ENCODE measurements at regions of chr16 and their contacts with region 1.

Region 1: DNA sequence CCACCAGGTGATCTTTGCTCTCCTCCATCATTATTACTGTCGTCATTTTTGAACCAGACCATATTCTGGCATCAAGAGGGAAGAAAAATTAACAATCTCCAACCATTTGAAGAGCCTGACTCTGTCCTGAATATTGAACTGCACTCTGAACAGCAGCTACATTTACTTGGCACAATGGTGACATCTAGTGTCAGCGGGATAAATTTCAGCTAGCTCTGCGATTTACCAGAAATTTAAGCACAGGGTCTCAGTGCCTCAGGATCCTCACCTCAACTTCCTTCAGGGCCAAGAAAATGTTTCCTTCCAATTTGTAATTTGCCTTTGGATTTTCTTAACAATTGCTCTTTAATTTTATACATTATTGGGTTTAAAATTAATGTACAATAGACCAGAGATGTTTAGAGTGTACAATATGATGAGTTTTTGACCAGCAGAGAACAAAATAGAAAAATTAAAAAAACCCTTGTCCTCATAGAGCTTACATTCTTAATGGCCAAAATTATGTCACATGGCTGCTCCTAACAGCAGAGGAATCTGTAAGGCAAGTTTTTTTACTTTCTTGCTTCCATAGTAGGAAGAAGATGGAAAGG is 10.7 kb upstream of the ZNF19 start:
- DNase-seq: peak; percentile 68
- ATAC-seq: peak; percentile 85
- H3K4me3 ChIP-seq: no peak overlapping the region
- H3K27ac ChIP-seq: no peak overlapping the region
- H3K4me1 ChIP-seq: no peaks in the 10 kb centered on the region
- H3K27me3 ChIP-seq: no peaks in the 10 kb centered on the region
- CTCF ChIP-seq: peak; percentile 90
- EP300 ChIP-seq: no peak
- POLR2A ChIP-seq: no peak
- RAD21 ChIP-seq: peak; percentile 84

Region 2: GRCh38 chr16:71441348-71441781 is 58.5 kb before region 1 on chr16:
- CTCF ChIA-PET with region 1: interaction called, 22 read pairs
- POLR2A ChIA-PET with region 1: no interaction called
- in situ Hi-C with region 1: loop called (anchors 10 kb)
- intact Hi-C with region 1: loop called (anchors 2 kb)
- DNase-seq: no peak
- ATAC-seq: peak; percentile 76
- H3K4me3 ChIP-seq: no peak overlapping the region
- H3K27ac ChIP-seq: no peak overlapping the region
- H3K4me1 ChIP-seq: peaks cover 8% of the 10 kb centered on the region
- H3K27me3 ChIP-seq: peaks cover 4 to 21% of the 10 kb centered on the region in 2 experiments
- CTCF ChIP-seq: peak; percentile 87
- EP300 ChIP-seq: no peak
- POLR2A ChIP-seq: no peak
- RAD21 ChIP-seq: peak; percentile 85

Region 3: DNA sequence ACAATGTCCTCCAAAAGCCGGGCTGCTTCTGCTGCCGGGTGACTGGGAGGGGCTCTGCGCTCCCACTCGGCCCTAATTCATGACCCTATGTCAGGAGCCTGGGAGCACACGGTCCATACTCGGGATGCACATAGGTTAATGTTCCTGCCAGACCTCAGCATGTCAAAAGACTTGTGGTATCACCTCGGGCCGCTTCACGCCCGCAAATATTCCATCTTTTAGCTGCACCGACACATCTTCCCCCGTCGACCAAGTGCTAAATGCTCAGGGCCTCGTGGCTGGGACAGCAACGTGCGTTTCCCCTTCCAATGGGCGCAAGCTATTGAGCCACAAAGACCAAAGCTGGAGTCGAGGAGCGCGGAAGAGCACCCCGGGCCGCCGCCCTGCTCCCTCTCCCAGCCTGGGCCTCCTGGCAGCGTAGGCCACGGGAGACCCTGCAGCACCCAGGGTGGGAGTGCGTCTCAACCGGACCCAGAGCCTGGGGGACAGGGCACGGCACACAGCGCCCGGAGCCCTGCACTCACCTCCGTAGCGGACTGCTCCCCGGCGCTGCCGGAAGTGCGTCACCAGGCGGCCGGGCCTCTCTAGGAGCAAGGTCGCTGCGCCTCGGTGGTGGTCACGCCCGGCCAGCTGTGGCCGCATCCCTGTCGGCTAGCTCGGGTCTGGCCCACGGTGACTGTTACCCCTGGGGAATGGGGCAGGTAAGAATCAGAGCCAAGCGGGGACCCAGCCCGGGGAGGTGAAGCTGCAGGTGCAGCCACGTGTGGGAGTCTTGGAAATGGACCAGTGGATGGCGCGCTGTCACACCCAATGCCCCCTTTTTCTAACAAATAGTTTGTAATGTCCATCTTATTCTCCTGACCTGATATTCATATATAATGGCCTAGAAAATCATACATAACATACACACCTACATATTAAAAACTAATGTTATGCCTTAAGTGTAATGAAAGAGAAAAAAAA is 37.9 kb before region 1 on chr16 and contains the start of gene ZNF23:
- CTCF ChIA-PET with region 1: no interaction called
- POLR2A ChIA-PET with region 1: interaction called, 10 read pairs
- in situ Hi-C with region 1: no loop called
- intact Hi-C with region 1: loop called (anchors 5 kb)
- DNase-seq: peak; percentile 64
- ATAC-seq: peak; percentile 99
- H3K4me3 ChIP-seq: peak within 1 kb of the TSS; percentile 73 to 90 (median 89)
- H3K27ac ChIP-seq: peak within 1 kb of the TSS; percentile 64
- H3K4me1 ChIP-seq: peaks cover 25% of the 10 kb centered on the region
- H3K27me3 ChIP-seq: no peaks in the 10 kb centered on the region; a peak in 1 of 5 replicates
- CTCF ChIP-seq: peak; percentile 57
- EP300 ChIP-seq: 0 out of 4 replicates have a peak, but pooled peaks have one; percentile 24 to 56
- POLR2A ChIP-seq: peak; percentile 96 to 99
- RAD21 ChIP-seq: peak; percentile 71
- total RNA-seq, gene ZNF23: 12.2 and 14.0 TPM in 2 replicates

Region 4: DNA sequence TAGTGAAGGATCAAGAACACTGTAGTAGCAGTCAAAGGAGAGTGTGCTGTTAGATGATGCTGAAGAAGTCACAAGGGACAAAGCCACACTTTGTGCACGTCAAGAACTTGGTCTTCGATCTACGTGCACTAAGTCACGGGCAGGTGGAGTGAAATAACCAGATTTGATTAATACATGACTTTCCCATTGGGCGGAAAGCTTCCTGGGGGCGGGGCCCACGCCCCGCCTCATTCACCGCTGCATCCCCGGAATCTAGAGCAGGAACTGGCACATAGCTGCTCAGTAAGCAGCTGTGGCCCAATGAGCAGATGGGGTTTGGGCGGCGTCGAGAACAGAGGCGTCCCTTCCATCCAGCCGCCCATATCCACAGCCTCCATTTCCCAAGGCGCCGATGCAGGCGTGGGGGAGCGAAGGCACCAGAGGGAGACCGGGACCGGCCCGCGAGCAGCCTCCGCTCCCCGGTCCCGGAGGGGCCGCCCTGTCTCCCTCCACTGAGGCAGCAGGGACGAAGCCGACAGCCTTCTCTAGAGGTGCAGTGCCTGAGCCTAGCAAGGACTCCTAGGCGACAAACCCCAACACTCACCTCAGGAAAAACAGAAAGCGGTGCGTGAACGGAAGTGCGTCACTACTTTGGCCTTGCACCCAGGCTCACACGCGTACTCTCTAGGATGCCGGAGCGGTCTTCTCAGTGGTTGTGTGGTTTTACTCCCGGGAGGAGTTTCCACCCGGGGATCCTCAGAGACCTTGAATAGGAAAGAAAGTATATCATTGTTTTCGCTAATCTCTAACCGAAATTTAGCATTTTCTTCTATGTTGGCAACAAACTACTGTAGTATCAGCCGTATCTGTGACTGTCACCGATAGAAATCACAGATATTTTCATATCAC is 15.6 kb before region 1 on chr16:
- CTCF ChIA-PET with region 1: interaction called, 10 read pairs
- POLR2A ChIA-PET with region 1: interaction called, 5 read pairs
- in situ Hi-C with region 1: no loop called
- intact Hi-C with region 1: no loop called
- DNase-seq: peak; percentile 91
- ATAC-seq: peak; percentile 93
- H3K4me3 ChIP-seq: peak overlapping the region; percentile 81 to 95 (median 88)
- H3K27ac ChIP-seq: peak overlapping the region; percentile 83
- H3K4me1 ChIP-seq: peaks cover 24% of the 10 kb centered on the region
- H3K27me3 ChIP-seq: peaks cover 0 to 4% of the 10 kb centered on the region in 2 experiments; a peak in 2 of 5 replicates
- CTCF ChIP-seq: no peak; the same call in 1 of the 2 replicates
- EP300 ChIP-seq: no peak
- POLR2A ChIP-seq: peak; percentile 85 to 86
- RAD21 ChIP-seq: peak; percentile 46; the same call in 1 of the 2 replicates

Region 5: GRCh38 chr16:71537643-71538042 is 37.8 kb after region 1 on chr16:
- CTCF ChIA-PET with region 1: no interaction called
- POLR2A ChIA-PET with region 1: no interaction called
- in situ Hi-C with region 1: loop called (anchors 5 kb)
- intact Hi-C with region 1: loop called (anchors 5 kb)
- DNase-seq: peak; percentile 66
- ATAC-seq: peak; percentile 93
- H3K4me3 ChIP-seq: no peak overlapping the region
- H3K27ac ChIP-seq: no peak overlapping the region
- H3K4me1 ChIP-seq: no peaks in the 10 kb centered on the region
- H3K27me3 ChIP-seq: peaks cover 0 to 19% of the 10 kb centered on the region in 2 experiments; a peak in 3 of 5 replicates
- CTCF ChIP-seq: peak; percentile 92
- EP300 ChIP-seq: no peak
- POLR2A ChIP-seq: no peak
- RAD21 ChIP-seq: peak; percentile 77

Region 6: GRCh38 chr16:71681360-71681980 is 181.6 kb after region 1 on chr16:
- CTCF ChIA-PET with region 1: no interaction called
- POLR2A ChIA-PET with region 1: no interaction called
- in situ Hi-C with region 1: no loop called
- intact Hi-C with region 1: no loop called
- DNase-seq: no peak
- ATAC-seq: no peak
- H3K4me3 ChIP-seq: no peak overlapping the region
- H3K27ac ChIP-seq: no peak overlapping the region
- H3K4me1 ChIP-seq: no peaks in the 10 kb centered on the region
- H3K27me3 ChIP-seq: no peaks in the 10 kb centered on the region
- CTCF ChIP-seq: no peak
- EP300 ChIP-seq: no peak
- POLR2A ChIP-seq: no peak
- RAD21 ChIP-seq: no peak